Activated CD4-positive, alpha-beta T cell treated with anti-CD3 and anti-CD28 coated beads, Interleukin-2, amount 10 ng/mL, durations not matched to agents 24 days and 14 days (primary cell): ENCODE measurements at regions of chr9 and their contacts with region 1.

Region 1: GRCh38 chr9:97386733-97387503 is 25.0 kb upstream of the TDRD7 start:
- DNase-seq: peak; percentile 93
- H3K4me3 Mint-ChIP-seq: no peak overlapping the region
- H3K27ac Mint-ChIP-seq: no peak overlapping the region
- H3K4me1 Mint-ChIP-seq: peaks cover 26% of the 10 kb centered on the region
- H3K27me3 Mint-ChIP-seq: peaks cover 24% of the 10 kb centered on the region

Region 2: GRCh38 chr9:96420468-96421219 is 966.3 kb before region 1 on chr9:
- intact Hi-C with region 1: no loop called
- DNase-seq: peak; percentile 74
- H3K4me3 Mint-ChIP-seq: peak overlapping the region; percentile 91
- H3K27ac Mint-ChIP-seq: peak overlapping the region; percentile 87
- H3K4me1 Mint-ChIP-seq: peaks cover 30% of the 10 kb centered on the region
- H3K27me3 Mint-ChIP-seq: no peaks in the 10 kb centered on the region

Region 3: DNA sequence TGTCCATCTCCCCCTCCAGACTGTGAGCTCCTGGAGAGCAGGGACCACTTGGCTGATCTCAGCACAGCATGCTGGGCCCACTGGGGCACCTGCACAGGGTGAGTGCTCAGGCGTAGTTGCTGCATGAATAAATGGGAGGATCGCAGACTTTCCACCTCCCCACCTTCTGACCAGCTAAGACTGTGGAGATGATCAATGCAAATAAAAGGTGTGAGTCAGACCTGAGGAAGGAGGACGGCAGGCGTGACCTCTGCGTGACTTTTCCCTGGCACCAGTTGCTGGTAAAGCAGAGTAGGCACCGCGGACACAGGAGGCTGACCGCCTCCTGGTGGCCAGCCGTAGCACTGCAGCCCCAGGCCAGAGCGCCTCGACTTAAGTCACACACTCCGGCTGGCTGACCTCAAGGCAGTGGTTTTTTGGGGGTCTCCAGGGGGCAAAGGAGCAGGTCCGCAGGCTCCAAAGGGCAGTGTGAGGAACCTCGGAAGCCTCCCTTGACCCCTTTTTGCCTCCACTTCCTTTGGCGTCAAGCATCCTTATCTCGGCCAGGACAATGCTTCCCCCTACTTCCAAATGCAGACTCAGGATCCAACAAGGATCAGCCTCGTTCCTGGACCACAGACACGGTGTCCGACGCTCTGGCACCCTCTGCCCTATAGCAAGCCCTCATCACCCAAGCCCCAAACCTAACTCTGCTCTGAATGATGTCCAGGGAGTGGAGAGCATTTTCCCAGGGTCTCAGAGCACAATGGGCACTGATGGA is 12.3 kb after region 1 on chr9:
- intact Hi-C with region 1: loop called (anchors 1 kb)
- DNase-seq: peak; percentile 91
- H3K4me3 Mint-ChIP-seq: no peak overlapping the region
- H3K27ac Mint-ChIP-seq: no peak overlapping the region
- H3K4me1 Mint-ChIP-seq: peaks cover 21% of the 10 kb centered on the region
- H3K27me3 Mint-ChIP-seq: peaks cover 37% of the 10 kb centered on the region

Region 4: GRCh38 chr9:97598461-97599288 is 211.8 kb after region 1 on chr9:
- intact Hi-C with region 1: loop called (anchors 1 kb)
- DNase-seq: peak; percentile 93
- H3K4me3 Mint-ChIP-seq: peak overlapping the region; percentile 38
- H3K27ac Mint-ChIP-seq: no peak overlapping the region
- H3K4me1 Mint-ChIP-seq: peaks cover 8% of the 10 kb centered on the region
- H3K27me3 Mint-ChIP-seq: peaks cover 2% of the 10 kb centered on the region

Region 5: GRCh38 chr9:97615439-97616072 is 228.6 kb after region 1 on chr9:
- intact Hi-C with region 1: loop called (anchors 1 kb)
- DNase-seq: peak; percentile 89
- H3K4me3 Mint-ChIP-seq: no peak overlapping the region
- H3K27ac Mint-ChIP-seq: no peak overlapping the region
- H3K4me1 Mint-ChIP-seq: peaks cover 20% of the 10 kb centered on the region
- H3K27me3 Mint-ChIP-seq: no peaks in the 10 kb centered on the region